ENCODE measurements at regions of chr14 and their contacts with region 1.

Region 1: GRCh38 chr14:105635560-105635959 is 109.2 kb downstream of the TMEM121 start:
- DNase-seq: no peak
- ATAC-seq: no peak
- H3K4me3 ChIP-seq: no peak overlapping the region
- H3K4me3 Mint-ChIP-seq: no peak overlapping the region
- H3K27ac ChIP-seq: no peak overlapping the region
- H3K27ac Mint-ChIP-seq: no peak overlapping the region
- H3K4me1 ChIP-seq: no peaks in the 10 kb centered on the region
- H3K4me1 Mint-ChIP-seq: peaks cover 0 to 4% (median 0%) of the 10 kb centered on the region in 7 donors
- H3K27me3 ChIP-seq: no peaks in the 10 kb centered on the region
- H3K27me3 Mint-ChIP-seq: peaks cover 0 to 10% (median 0%) of the 10 kb centered on the region in 5 donors

Region 2: DNA sequence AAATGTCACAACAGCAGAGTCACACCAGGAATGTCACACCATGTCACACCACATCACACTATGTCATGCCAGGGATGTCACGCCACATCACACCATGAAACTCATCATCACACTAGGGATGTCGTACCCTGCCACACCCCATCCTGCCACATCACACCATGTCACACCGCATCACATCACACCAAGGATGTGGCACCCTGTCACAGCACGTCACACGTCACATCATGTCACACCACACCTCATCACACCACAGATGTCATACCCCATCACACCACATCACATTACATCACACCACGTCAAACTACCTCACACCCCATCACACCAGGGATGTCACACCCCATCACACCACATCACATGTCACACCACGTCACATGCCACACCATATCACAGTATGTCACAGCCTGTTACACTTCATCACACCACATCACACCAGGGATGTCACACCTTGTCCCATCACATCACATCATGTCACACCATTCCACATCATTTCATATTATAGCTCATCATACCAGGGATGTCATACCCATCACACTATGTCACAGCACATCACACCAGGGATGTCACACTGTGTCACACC is 18.3 kb before region 1 on chr14:
- CTCF ChIA-PET with region 1: no interaction called
- POLR2A ChIA-PET with region 1: no interaction called
- intact Hi-C with region 1: loop called in 1 of 2 experiments (anchors 2 kb)
- DNase-seq: no peak
- ATAC-seq: peak; percentile 27
- H3K4me3 ChIP-seq: no peak overlapping the region
- H3K4me3 Mint-ChIP-seq: no peak overlapping the region
- H3K27ac ChIP-seq: no peak overlapping the region
- H3K27ac Mint-ChIP-seq: peak overlapping the region in 1 of 9 donors; percentile 14
- H3K4me1 ChIP-seq: no peaks in the 10 kb centered on the region
- H3K4me1 Mint-ChIP-seq: no peaks in the 10 kb centered on the region
- H3K27me3 ChIP-seq: no peaks in the 10 kb centered on the region
- H3K27me3 Mint-ChIP-seq: peaks cover 0 to 8% (median 6%) of the 10 kb centered on the region in 5 donors